ENCODE measurements at regions of chr16 and their contacts with region 1.

Region 1: DNA sequence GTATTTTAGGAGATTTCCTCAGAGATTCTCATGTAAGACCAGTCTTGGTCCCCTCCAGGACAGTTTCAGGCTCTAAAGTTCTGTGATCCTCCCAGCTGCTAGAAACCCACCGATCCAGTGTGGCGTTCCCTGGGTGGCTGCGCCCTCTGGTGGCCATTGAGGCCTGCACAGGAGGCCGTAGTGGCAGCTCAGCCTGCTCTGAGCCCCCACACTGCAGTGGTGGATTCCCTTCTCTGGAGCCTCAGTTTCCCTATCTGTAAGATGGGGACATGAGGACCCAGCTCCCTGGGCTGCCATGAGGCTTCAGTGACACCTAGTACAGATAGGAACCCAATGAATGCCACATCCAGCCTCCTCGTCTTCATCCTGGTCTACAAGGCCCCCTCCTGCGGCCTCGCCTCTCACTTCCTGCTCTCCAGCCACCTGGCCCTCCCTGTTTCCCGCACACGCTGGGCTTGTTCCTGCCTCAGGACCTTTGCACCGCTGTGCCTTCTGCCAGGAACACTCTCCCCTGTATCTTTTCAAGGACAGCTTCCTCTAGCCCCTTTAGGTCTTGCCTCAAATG is 16.5 kb downstream of the CCDC102A start:
- DNase-seq: peak; percentile 74 to 88 (median 85)
- ATAC-seq: peak; percentile 85
- H3K4me3 ChIP-seq: no peak overlapping the region
- H3K4me1 ChIP-seq: no peaks in the 10 kb centered on the region
- CTCF ChIP-seq: peak; percentile 97

Region 2: GRCh38 chr16:57300387-57301125 is 219.3 kb before region 1 on chr16:
- intact Hi-C with region 1: loop called in 1 of 2 experiments (anchors 10 kb)
- DNase-seq: peak; percentile 99 to 100 (median 100)
- ATAC-seq: peak; percentile 96
- H3K4me3 ChIP-seq: peak overlapping the region; percentile 4
- H3K4me1 ChIP-seq: peaks cover 16% of the 10 kb centered on the region
- CTCF ChIP-seq: peak; percentile 89

Region 3: DNA sequence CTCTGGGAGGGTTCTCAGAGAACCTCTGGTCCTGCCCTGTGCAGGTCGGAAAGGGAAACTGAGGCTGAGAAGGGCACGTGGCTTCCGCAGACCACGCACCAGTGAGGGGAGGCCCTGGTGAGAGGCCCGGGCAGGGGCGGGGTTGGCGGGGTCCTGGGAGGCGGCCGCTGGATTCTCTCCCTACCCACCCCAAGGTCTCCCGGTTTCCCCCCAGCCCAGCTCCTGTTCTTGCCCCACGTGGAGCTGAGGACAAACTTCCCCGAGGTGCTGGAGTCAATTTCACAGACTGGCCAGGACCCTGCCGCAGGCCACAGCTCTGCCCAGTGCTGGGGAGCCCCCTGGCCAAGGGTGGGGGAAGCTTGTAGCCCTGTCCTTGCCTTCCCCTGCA is 103.8 kb before region 1 on chr16:
- intact Hi-C with region 1: loop called in 1 of 2 experiments (anchors 2 kb)
- DNase-seq: no peak
- ATAC-seq: no peak
- H3K4me3 ChIP-seq: no peak overlapping the region
- H3K4me1 ChIP-seq: peaks cover 10% of the 10 kb centered on the region
- CTCF ChIP-seq: no peak

Measured in mucosa of descending colon (tissue), 3 donors.